Thyroid gland (tissue), 4 donors: ENCODE measurements at regions of chr11 and their contacts with region 1.

Region 1: GRCh38 chr11:44727373-44728287 is 868 bp downstream of the TSPAN18 start:
- DNase-seq: peak; percentile 76
- H3K4me3 ChIP-seq: peak overlapping the region; percentile 28 to 85 (median 40)
- H3K27ac ChIP-seq: peak overlapping the region in 2 of 3 donors; percentile 65 to 81
- H3K4me1 ChIP-seq: peaks cover 16 to 43% of the 10 kb centered on the region in 2 donors
- H3K27me3 ChIP-seq: no peaks in the 10 kb centered on the region
- CTCF ChIP-seq: peak; percentile 64 to 95 (median 84)
- POLR2A ChIP-seq: no peak

Region 2: DNA sequence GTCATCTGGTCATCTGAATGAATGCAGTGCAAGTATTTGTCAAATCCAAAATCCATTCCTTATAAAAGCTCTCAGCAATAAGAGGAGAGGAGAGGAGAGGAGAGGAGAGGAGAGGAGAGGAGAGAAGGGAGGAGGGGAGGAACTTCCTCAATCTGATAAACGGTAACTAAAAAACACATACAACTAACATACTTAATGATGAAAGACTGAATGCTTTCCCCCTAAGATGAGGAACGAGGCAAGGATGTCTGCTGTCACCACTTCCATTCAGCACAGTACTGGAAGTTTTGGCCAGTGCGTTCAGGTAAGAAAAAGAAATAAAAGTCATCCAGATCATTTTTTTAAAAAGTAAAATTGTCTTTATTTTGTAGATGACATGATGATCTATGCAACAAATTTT is 81.8 kb before region 1 on chr11:
- intact Hi-C with region 1: no loop called
- DNase-seq: no peak
- H3K4me3 ChIP-seq: no peak overlapping the region
- H3K27ac ChIP-seq: no peak overlapping the region
- H3K4me1 ChIP-seq: no peaks in the 10 kb centered on the region
- H3K27me3 ChIP-seq: no peaks in the 10 kb centered on the region
- CTCF ChIP-seq: no peak
- POLR2A ChIP-seq: no peak

Region 3: GRCh38 chr11:44684859-44685281 is 42.8 kb before region 1 on chr11:
- intact Hi-C with region 1: no loop called
- DNase-seq: no peak
- H3K4me3 ChIP-seq: no peak overlapping the region
- H3K27ac ChIP-seq: no peak overlapping the region
- H3K4me1 ChIP-seq: peaks cover 4 to 15% of the 10 kb centered on the region in 2 donors
- H3K27me3 ChIP-seq: no peaks in the 10 kb centered on the region
- CTCF ChIP-seq: no peak
- POLR2A ChIP-seq: no peak

Region 4: GRCh38 chr11:44760917-44761550 is 33.4 kb after region 1 on chr11:
- intact Hi-C with region 1: no loop called
- DNase-seq: no peak
- H3K4me3 ChIP-seq: no peak overlapping the region
- H3K27ac ChIP-seq: peak overlapping the region in 1 of 3 donors; percentile 18
- H3K4me1 ChIP-seq: peaks cover 0 to 19% of the 10 kb centered on the region in 2 donors
- H3K27me3 ChIP-seq: no peaks in the 10 kb centered on the region
- CTCF ChIP-seq: no peak
- POLR2A ChIP-seq: no peak

Region 5: GRCh38 chr11:44899959-44900358 is 172.3 kb after region 1 on chr11:
- intact Hi-C with region 1: loop called (anchors 5 kb)
- DNase-seq: peak in 1 of 2 donors; percentile 14
- H3K4me3 ChIP-seq: no peak overlapping the region
- H3K27ac ChIP-seq: no peak overlapping the region
- H3K4me1 ChIP-seq: no peaks in the 10 kb centered on the region
- H3K27me3 ChIP-seq: no peaks in the 10 kb centered on the region
- CTCF ChIP-seq: no peak
- POLR2A ChIP-seq: no peak